ENCODE measurements at regions of chr1 and their contacts with region 1.

Region 1: GRCh38 chr1:10796019-10796944 is at the start of gene CASZ1:
- DNase-seq: peak in 9 of 10 donors; percentile 50 to 86 (median 70)
- H3K4me3 ChIP-seq: peak within 1 kb of the TSS; percentile 33 to 72 (median 58)
- H3K27ac ChIP-seq: no peak within 1 kb of the TSS
- H3K27me3 ChIP-seq: peaks cover 0 to 77% (median 48%) of the 10 kb centered on the region in 45 donors
- CTCF ChIP-seq: peak in 14 of 56 donors; percentile 8 to 45 (median 20)
- total RNA-seq, gene CASZ1: 0.34 to 6.1 (median 2.8) TPM

Region 2: DNA sequence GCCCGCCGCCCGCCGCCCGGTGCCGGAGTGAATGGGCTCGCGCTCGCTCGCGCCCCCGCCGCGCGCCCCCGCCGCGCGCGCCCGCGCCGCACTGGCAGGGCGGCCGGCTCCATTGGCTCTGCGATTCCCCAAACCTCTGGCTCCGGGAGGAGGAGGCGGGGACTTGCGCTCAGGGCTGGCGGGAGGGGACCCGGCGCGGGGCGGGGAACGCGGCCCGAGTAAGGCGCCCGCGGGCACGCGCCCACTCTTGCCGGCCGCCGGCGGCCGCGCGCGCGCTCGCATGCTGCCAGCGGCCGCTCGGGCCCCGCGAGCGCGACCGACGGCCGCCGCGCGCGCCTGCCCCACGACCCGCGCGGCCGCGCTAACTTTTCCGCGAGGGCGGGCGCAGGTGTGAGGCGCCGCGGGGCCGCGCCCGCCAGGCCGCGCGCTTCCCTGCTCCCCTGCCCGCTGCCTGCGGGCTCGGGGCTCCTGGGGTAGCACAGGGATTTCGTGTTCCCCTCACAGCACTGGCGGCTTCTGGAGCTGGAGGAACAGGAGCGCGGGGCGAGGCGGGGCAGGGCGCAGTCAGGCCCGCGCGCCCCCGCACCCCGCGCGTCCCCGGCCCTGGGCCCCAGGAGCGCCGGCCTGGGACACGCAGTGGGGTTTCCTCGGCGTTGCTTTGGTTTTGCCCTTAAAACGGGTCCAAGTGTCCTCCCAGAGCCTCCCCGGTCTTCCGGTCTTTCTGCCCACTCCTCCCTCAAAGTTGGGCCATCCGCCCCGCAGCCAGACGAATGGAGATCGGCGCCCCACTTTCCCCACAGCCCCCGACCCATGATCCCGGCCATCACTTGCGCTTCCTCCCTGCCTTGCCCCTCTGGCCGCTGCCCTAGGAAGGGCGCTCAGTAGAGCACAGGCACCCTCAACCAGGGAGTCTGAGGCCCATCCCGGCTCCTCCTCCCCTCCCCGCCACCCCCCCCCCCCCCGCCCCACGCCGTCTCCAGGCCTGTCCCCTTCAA is 101.4 kb before region 1 on chr1:
- intact Hi-C with region 1: loop called in 1 of 2 experiments (anchors 5 kb)
- DNase-seq: peak; percentile 60 to 91 (median 78)
- H3K4me3 ChIP-seq: peak overlapping the region in 58 of 59 donors; percentile 11 to 74 (median 55)
- H3K27ac ChIP-seq: peak overlapping the region in 25 of 59 donors; percentile 6 to 82 (median 60)
- H3K27me3 ChIP-seq: no peaks in the 10 kb centered on the region
- CTCF ChIP-seq: no peak

Region 3: GRCh38 chr1:10856863-10857598 is 60.7 kb after region 1 on chr1:
- intact Hi-C with region 1: no loop called
- DNase-seq: no peak
- H3K4me3 ChIP-seq: no peak overlapping the region
- H3K27ac ChIP-seq: no peak overlapping the region
- H3K27me3 ChIP-seq: peaks cover 0 to under 1% (median 0%) of the 10 kb centered on the region in 45 donors
- CTCF ChIP-seq: no peak

Region 4: GRCh38 chr1:10867138-10867721 is 70.9 kb after region 1 on chr1:
- intact Hi-C with region 1: loop called in 1 of 2 experiments (anchors 2 kb)
- DNase-seq: peak in 8 of 10 donors; percentile 31 to 73 (median 48)
- H3K4me3 ChIP-seq: peak overlapping the region; percentile 22 to 66 (median 48)
- H3K27ac ChIP-seq: peak overlapping the region in 1 of 59 donors; percentile 18
- H3K27me3 ChIP-seq: peaks cover 0 to 14% (median 0%) of the 10 kb centered on the region in 45 donors
- CTCF ChIP-seq: peak in 55 of 56 donors; percentile 14 to 96 (median 73)